WTC11 (cell line): ENCODE measurements at regions of chr4 and their contacts with region 1.

Region 1: DNA sequence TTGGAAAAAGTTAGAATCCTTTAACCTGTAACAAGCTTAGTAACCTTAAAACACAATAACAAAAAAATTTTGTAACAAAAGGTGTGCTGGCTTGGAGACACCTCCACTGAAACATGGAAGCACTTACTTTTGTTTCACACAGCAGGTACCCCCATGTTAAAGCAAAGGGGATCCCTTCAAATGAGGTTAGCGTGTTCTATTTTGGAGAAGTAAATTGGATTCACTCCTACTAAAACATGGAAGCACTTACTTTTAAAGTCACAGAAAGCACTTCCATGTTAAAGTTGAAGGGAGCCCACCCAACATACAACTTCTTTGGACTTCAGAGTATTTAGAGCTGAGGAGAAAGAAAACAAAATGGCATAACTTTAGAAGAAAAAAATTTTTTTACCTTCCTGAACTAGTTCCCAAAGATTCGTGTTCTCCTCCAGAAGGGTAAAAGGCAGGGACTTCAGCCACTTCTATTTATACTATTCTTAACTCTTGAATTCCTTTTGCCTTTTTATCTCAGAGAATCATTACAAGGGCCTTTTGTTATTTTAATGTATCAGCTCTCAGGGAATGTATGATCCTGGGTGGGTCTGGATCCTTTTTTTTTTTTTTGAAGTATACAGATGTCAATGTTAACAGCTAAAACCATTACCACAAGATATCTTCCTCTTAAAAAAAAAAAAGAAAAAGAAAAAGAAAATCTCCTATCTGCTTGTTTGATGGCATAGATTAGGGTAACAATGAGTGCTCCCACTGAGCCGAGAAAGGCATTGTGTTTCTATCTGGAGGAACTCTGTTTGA is 11.5 kb downstream of the LARP7 start:
- DNase-seq: peak; percentile 51
- ATAC-seq: peak; percentile 33
- H3K4me3 Mint-ChIP-seq: peak overlapping the region; percentile 94
- H3K27ac Mint-ChIP-seq: peak overlapping the region; percentile 93
- H3K4me1 Mint-ChIP-seq: peaks cover 41% of the 10 kb centered on the region
- H3K27me3 Mint-ChIP-seq: peaks cover 7% of the 10 kb centered on the region
- CTCF ChIP-seq: no peak

Region 2: DNA sequence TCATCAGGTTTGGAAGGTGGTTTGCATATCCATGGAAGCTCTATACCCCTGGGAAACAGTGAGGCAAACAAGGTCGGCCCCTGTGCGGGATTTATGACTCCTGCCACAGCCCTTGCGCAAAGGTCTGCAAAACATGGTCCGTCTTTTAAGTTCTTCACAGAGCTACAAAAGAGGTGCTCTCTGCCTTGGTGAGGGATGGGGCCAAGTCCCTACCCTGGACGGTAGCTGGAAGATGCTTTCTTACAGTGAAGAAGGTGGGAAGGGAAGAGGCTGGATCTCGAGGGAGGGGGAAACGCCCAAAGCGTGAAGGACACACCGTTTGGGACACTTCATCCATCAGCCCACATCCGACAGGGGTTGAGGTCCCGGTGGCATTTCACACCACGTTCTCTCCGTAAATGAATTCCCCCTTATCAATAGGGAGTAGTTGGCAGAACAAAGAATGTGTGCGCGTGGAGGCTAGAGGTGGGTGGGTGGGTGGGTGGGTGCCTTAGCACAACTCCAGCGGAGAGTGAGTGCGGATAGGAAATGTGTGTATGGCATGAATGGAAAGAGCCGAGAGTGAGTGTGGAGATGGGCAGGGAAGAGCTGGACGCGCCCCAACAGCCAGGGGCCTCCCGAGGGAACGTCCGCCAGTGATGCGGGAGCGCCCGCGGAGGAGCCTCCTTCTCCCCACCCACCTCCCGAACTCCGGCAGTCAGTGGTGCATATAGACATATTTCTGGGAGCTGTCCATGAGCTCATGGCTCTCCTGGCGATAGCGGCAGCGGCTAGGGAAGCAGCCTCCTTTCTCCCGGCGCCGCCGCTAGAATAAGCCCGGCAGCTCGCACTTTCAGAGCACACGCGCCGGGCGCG is 56.8 kb after region 1 on chr4:
- CTCF ChIA-PET with region 1: no interaction called
- POLR2A ChIA-PET with region 1: interaction called, 35 read pairs
- DNase-seq: peak; percentile 47
- ATAC-seq: peak; percentile 29
- H3K4me3 Mint-ChIP-seq: peak overlapping the region; percentile 98
- H3K27ac Mint-ChIP-seq: peak overlapping the region; percentile 99
- H3K4me1 Mint-ChIP-seq: peaks cover 46% of the 10 kb centered on the region
- H3K27me3 Mint-ChIP-seq: no peaks in the 10 kb centered on the region; the same call in 1 of the 2 replicates
- CTCF ChIP-seq: no peak

Region 3: DNA sequence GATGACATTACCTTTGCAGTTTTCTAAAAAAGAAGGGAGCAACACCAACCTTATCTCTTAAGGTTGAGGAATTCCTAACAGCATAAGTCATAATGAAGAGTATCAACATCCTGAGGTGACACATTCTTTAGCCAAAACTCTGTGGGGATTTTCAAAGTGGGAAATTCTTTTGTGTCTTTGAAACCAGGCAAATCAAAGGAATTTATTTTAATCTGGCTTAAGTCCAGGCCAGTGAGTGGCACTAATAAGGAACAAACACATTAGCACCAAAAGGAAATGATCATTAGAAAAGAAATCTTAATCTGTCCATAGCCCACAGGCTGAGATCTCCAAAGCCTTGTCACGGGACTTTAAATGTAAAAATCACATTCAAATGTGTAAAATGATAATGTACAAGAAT is 98.6 kb after region 1 on chr4:
- CTCF ChIA-PET with region 1: interaction called, 12 read pairs
- POLR2A ChIA-PET with region 1: interaction called, 50 read pairs
- DNase-seq: no peak
- ATAC-seq: peak; percentile 36
- H3K4me3 Mint-ChIP-seq: peak overlapping the region; percentile 47
- H3K27ac Mint-ChIP-seq: peak overlapping the region; percentile 99
- H3K4me1 Mint-ChIP-seq: peaks cover 64% of the 10 kb centered on the region
- H3K27me3 Mint-ChIP-seq: no peaks in the 10 kb centered on the region
- CTCF ChIP-seq: no peak

Region 4: GRCh38 chr4:112759313-112759712 is 110.9 kb after region 1 on chr4:
- CTCF ChIA-PET with region 1: interaction called, 116 read pairs
- POLR2A ChIA-PET with region 1: interaction called, 28 read pairs
- DNase-seq: peak; percentile 40
- ATAC-seq: peak; percentile 86
- H3K4me3 Mint-ChIP-seq: no peak overlapping the region
- H3K27ac Mint-ChIP-seq: peak overlapping the region; percentile 96
- H3K4me1 Mint-ChIP-seq: peaks cover 61% of the 10 kb centered on the region
- H3K27me3 Mint-ChIP-seq: no peaks in the 10 kb centered on the region
- CTCF ChIP-seq: no peak